Common myeloid progenitor, CD34-positive (primary cell): ENCODE measurements at regions of chr17 and their contacts with region 1.

Region 1: GRCh38 chr17:55238179-55238930 is 26.4 kb upstream of the HLF start:
- DNase-seq: peak; percentile 92 to 94 (median 94)
- H3K4me3 ChIP-seq: peak overlapping the region; percentile 45 to 91 (median 77)
- H3K27ac ChIP-seq: no peak overlapping the region
- H3K4me1 ChIP-seq: peaks cover 4 to 31% (median 25%) of the 10 kb centered on the region in 4 experiments
- H3K27me3 ChIP-seq: no peaks in the 10 kb centered on the region

Region 2: DNA sequence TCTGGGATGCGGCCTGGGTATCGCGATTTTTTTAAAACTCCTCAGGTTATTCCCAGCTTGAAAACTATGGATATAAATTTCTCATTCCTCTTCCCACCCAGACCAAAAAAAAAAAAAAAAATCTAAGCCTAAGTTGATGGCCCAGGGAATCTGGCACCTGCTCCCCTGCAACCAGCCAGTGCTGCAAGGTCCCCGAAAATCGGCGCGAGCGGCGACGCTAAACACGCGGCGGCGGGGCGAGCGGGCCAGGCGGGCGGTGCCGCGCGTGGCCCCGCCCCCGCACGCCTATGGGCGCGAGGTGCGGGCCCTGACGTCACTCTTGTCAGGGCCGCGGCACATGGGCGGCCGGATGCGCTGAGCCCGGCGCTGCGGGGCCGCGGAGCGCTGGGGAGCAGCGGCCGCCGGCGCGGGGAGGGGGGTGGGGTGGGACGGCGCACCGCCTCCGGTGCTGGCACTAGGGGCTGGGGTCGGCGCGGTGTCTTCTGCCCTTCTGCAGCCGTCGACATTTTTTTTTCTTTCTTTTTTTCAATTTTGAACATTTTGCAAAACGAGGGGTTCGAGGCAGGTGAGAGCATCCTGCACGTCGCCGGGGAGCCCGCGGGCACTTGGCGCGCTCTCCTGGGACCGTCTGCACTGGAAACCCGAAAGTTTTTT is 26.4 kb after region 1 on chr17 and contains the start of gene HLF:
- CTCF ChIA-PET with region 1: interaction called, 12 read pairs
- POLR2A ChIA-PET with region 1: interaction called, 7 read pairs
- DNase-seq: peak; percentile 88 to 93 (median 92)
- H3K4me3 ChIP-seq: peak within 1 kb of the TSS; percentile 45 to 86 (median 65)
- H3K27ac ChIP-seq: peak within 1 kb of the TSS; percentile 33 to 52
- H3K4me1 ChIP-seq: peaks cover 8 to 59% (median 26%) of the 10 kb centered on the region in 4 experiments
- H3K27me3 ChIP-seq: peaks cover 0 to 2% (median 0%) of the 10 kb centered on the region in 5 experiments